ENCODE measurements at regions of chr1 and their contacts with region 1.

Region 1: GRCh38 chr1:50704126-50704525 is 255.9 kb downstream of the FAF1 start:
- DNase-seq: peak; percentile 6
- ATAC-seq: peak; percentile 63
- H3K4me3 ChIP-seq: no peak overlapping the region
- H3K27ac ChIP-seq: no peak overlapping the region
- H3K4me1 ChIP-seq: no peaks in the 10 kb centered on the region
- H3K27me3 ChIP-seq: no peaks in the 10 kb centered on the region
- CTCF ChIP-seq: peak; percentile 63 to 72 (median 71)
- POLR2A ChIP-seq: no peak
- RAD21 ChIP-seq: peak; percentile 63

Region 2: DNA sequence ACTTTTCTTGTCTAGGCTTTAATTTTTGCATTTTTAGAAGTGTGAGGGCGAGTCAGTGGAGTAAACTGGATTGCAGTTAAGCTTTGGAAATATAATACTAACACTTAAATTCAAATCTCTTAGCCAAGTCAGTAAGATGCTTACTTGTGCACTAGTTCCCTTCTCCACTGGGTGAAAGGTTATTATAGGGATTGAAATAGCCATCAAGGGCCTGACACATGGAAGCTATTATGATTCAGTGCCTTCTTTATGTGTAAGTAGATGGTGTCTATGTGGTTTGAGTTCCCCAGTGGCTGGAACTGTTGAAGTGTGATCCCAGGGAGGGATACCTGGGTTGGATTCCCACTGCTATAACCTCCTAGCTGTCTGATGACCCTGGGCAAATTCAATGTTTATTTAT is 256.2 kb before region 1 on chr1:
- CTCF ChIA-PET with region 1: no interaction called
- POLR2A ChIA-PET with region 1: no interaction called
- RAD21 ChIA-PET with region 1: no interaction called
- intact Hi-C with region 1: no loop called
- DNase-seq: no peak
- ATAC-seq: no peak
- H3K4me3 ChIP-seq: no peak overlapping the region
- H3K27ac ChIP-seq: no peak overlapping the region
- H3K4me1 ChIP-seq: no peaks in the 10 kb centered on the region
- H3K27me3 ChIP-seq: no peaks in the 10 kb centered on the region
- CTCF ChIP-seq: no peak
- POLR2A ChIP-seq: no peak
- RAD21 ChIP-seq: no peak

Region 3: GRCh38 chr1:50620680-50621329 is 83.3 kb before region 1 on chr1:
- CTCF ChIA-PET with region 1: interaction called, 31 read pairs
- POLR2A ChIA-PET with region 1: no interaction called
- RAD21 ChIA-PET with region 1: interaction called in 1 of 2 experiments, 4 read pairs
- intact Hi-C with region 1: loop called (anchors 2 kb)
- DNase-seq: peak; percentile 61
- ATAC-seq: peak; percentile 87
- H3K4me3 ChIP-seq: peak overlapping the region in 1 of 2 experiments; percentile 35; a peak in 1 of 4 replicates
- H3K27ac ChIP-seq: peak overlapping the region; percentile 46
- H3K4me1 ChIP-seq: peaks cover 0 to 17% of the 10 kb centered on the region in 2 experiments; a peak in 2 of 4 replicates
- H3K27me3 ChIP-seq: no peaks in the 10 kb centered on the region
- CTCF ChIP-seq: peak; percentile 61 to 65 (median 62)
- POLR2A ChIP-seq: no peak
- RAD21 ChIP-seq: peak; percentile 57

Region 4: DNA sequence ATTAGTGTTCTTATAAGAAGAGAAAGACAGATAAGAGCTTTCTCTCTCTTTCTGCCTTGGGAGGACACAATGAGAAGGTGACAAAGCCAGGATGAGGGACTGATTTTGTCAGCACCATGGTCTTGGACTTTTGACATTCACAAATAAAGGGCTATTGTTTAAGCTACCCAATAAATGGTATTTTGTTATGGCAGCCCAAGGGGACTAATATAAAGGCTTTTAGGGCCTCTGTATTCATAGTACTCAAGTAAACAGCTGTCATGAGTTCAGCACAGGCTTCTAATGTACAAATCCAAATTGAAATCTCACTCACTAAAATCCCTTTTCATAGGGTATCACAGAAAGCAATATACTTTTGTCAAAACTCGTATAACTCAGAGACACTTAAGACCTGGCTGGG is 13.2 kb after region 1 on chr1:
- CTCF ChIA-PET with region 1: interaction called, 12 read pairs
- POLR2A ChIA-PET with region 1: no interaction called
- RAD21 ChIA-PET with region 1: no interaction called
- intact Hi-C with region 1: no loop called
- DNase-seq: no peak
- ATAC-seq: no peak
- H3K4me3 ChIP-seq: no peak overlapping the region
- H3K27ac ChIP-seq: no peak overlapping the region
- H3K4me1 ChIP-seq: no peaks in the 10 kb centered on the region
- H3K27me3 ChIP-seq: no peaks in the 10 kb centered on the region
- CTCF ChIP-seq: no peak
- POLR2A ChIP-seq: no peak
- RAD21 ChIP-seq: no peak